Activated CD4-positive, alpha-beta T cell treated with anti-CD3 and anti-CD28 coated beads for 36 hours (primary cell): ENCODE measurements at regions of chr11 and their contacts with region 1.

Region 1: DNA sequence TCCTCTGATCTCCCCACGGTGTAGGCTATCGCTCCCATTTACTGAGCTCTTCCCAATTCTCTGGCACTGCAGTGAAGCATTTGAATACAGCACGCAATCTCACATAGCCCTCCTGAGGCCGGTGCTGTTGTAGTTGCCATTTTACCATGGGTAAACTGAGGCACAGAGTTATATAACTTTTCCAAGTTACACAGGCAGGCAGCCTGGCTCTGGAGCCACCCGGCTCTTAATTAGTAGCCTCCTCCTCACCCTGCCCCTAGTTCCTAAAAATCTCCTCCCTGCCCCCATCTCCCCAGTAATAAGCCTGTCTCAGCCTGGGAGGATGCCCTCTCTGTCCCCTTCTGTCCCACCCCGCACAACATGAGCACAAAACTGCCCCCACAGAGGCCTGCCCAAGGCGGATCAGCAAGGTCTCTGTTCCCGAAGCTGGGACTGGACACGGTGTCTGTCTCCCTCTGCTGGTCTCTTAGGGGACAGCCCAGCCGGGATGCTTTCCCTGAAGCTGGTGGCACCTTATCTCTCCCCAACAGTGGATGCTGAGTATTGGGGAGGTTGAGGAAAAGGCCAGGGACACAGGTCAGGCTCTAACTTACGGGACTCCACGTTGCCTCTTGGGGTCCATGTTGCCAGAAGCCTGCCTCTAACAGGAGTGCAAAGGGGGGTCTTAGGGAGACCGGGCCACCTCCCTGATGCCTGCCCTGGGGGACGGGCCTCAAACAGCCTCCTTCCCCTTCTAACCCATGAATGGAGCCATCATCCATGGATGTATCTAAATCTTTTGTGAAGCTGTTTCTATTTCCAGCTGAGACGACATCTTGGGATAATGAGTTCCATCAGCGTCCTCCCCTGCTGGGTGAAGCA is 9.1 kb upstream of the CLCF1 start:
- DNase-seq: peak; percentile 90
- ATAC-seq: peak; percentile 97
- H3K4me3 Mint-ChIP-seq: no peak overlapping the region
- H3K27ac Mint-ChIP-seq: no peak overlapping the region
- H3K4me1 Mint-ChIP-seq: peaks cover 2% of the 10 kb centered on the region
- H3K27me3 Mint-ChIP-seq: no peaks in the 10 kb centered on the region

Region 2: GRCh38 chr11:67082035-67082791 is 300.3 kb before region 1 on chr11:
- CTCF ChIA-PET with region 1: interaction called, 4 read pairs
- POLR2A ChIA-PET with region 1: no interaction called
- intact Hi-C with region 1: loop called in 1 of 2 experiments (anchors 1 kb)
- DNase-seq: no peak
- ATAC-seq: no peak
- H3K4me3 Mint-ChIP-seq: no peak overlapping the region
- H3K27ac Mint-ChIP-seq: no peak overlapping the region
- H3K4me1 Mint-ChIP-seq: peaks cover 19% of the 10 kb centered on the region
- H3K27me3 Mint-ChIP-seq: peaks cover 5% of the 10 kb centered on the region

Region 3: DNA sequence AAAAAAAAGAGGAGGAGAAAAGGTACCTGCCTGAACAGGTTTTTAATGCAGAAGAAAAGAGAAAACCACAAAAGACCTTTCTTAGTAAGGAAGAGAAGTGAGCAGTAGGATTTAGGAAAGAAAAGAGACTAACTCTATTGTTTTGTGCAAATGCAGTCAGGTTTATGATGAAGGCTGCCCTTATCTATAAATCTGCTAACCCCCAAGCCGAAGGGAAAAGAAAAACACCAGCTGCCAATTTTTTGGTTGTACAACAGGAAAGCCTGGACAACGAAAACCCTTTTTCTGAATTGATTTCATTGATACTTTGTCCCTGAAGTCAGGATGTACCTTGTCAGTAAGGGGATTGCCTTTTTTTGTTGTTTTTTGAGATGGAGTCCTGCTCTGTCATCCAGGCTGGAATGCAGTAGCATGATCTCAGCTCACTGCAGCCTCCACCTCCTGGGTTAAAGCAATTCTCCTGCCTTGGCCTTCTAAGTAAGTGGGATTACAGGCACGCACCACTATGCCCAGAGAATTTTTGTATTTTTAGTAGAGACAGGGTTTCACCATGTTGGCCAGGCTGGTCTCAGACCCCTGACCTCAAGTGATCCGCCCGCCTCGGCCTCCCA is 50.3 kb before region 1 on chr11:
- CTCF ChIA-PET with region 1: interaction called, 10 read pairs
- POLR2A ChIA-PET with region 1: no interaction called
- intact Hi-C with region 1: no loop called
- DNase-seq: no peak
- ATAC-seq: no peak
- H3K4me3 Mint-ChIP-seq: no peak overlapping the region
- H3K27ac Mint-ChIP-seq: no peak overlapping the region
- H3K4me1 Mint-ChIP-seq: no peaks in the 10 kb centered on the region
- H3K27me3 Mint-ChIP-seq: no peaks in the 10 kb centered on the region

Region 4: GRCh38 chr11:67345920-67346799 is 36.3 kb before region 1 on chr11:
- CTCF ChIA-PET with region 1: interaction called, 445 read pairs
- POLR2A ChIA-PET with region 1: interaction called, 3 read pairs
- intact Hi-C with region 1: loop called (anchors 1 kb)
- DNase-seq: peak; percentile 45
- ATAC-seq: peak; percentile 77
- H3K4me3 Mint-ChIP-seq: no peak overlapping the region
- H3K27ac Mint-ChIP-seq: peak overlapping the region; percentile 89
- H3K4me1 Mint-ChIP-seq: peaks cover 55% of the 10 kb centered on the region
- H3K27me3 Mint-ChIP-seq: no peaks in the 10 kb centered on the region

Region 5: DNA sequence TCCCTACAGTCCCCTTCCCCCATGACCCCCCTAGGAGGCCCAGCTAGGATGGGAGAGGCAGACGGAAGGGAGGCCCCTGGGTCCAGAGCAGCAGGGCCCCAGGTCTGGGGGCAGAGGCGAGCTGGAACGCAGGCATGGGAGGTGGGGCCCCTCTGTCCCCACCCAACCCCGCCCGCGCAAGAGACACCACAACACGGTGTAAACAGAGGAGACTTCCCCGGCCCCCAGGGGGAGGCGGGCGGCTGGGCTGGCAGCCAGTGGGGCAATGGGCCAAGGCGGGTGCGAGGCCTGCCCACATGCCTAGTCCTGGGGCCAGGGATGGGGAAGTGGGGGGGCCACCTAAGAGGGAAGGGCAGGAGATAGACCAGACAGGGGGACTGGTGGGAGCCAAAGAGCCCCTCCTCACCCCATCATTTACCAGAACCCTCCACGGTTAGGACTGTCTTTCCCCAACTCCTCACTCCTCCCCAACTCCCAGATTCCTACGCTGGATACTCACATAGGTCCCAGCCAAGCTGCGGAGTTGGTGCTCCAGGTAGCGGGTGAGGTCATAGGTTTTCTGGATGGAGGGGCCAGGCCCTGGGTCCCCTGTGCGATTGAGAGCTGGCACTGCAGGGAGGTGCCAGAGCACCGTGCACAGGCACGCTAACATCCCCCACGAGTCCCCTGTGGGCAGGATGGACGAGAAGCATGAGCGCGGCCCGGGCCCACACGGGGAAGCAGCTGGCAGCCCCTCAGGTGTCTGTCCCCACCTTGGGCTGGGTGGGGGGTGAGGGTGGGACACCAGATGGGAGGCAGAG is 15.3 kb before region 1 on chr11:
- CTCF ChIA-PET with region 1: interaction called, 44 read pairs
- POLR2A ChIA-PET with region 1: no interaction called
- intact Hi-C with region 1: no loop called
- DNase-seq: no peak
- ATAC-seq: no peak
- H3K4me3 Mint-ChIP-seq: no peak overlapping the region
- H3K27ac Mint-ChIP-seq: no peak overlapping the region
- H3K4me1 Mint-ChIP-seq: peaks cover 47% of the 10 kb centered on the region
- H3K27me3 Mint-ChIP-seq: peaks cover 20% of the 10 kb centered on the region